CD4-positive, alpha-beta T cell (primary cell): ENCODE measurements at regions of chr18 and their contacts with region 1.

Region 1: GRCh38 chr18:56748698-56749268 is 97.6 kb downstream of the WDR7 start:
- DNase-seq: peak in 3 of 14 experiments; percentile 21 to 51 (median 45)
- ATAC-seq: no peak
- H3K4me3 ChIP-seq: no peak overlapping the region
- H3K4me3 Mint-ChIP-seq: no peak overlapping the region
- H3K27ac ChIP-seq: no peak overlapping the region
- H3K27ac Mint-ChIP-seq: no peak overlapping the region
- H3K4me1 ChIP-seq: no peaks in the 10 kb centered on the region
- H3K4me1 Mint-ChIP-seq: peaks cover 25% of the 10 kb centered on the region
- H3K27me3 ChIP-seq: no peaks in the 10 kb centered on the region
- H3K27me3 Mint-ChIP-seq: no peaks in the 10 kb centered on the region
- CTCF ChIP-seq: peak; percentile 72

Region 2: DNA sequence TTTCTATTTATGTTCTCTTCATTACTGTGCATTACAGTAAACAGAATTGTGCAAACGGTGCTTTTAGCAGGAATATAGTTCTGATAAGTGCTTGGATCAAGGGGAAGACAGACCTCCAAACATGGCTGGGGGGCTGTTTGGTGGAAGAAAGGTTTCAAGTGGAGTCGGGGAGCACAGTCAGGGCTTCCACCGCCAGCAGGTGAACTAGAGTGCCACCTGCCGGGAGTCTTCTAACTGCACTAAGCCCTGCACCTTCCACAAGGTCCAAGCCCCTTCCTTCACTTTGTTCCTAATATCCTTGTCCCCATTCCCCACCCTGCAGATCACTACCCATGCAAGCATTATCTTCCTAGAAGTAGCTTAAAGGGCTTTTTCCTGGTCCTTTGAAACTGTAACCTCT is 697.5 kb after region 1 on chr18:
- CTCF ChIA-PET with region 1: no interaction called
- POLR2A ChIA-PET with region 1: no interaction called
- intact Hi-C with region 1: loop called in 1 of 2 experiments (anchors 5 kb)
- DNase-seq: no peak
- ATAC-seq: no peak
- H3K4me3 ChIP-seq: no peak overlapping the region
- H3K4me3 Mint-ChIP-seq: no peak overlapping the region
- H3K27ac ChIP-seq: no peak overlapping the region
- H3K27ac Mint-ChIP-seq: no peak overlapping the region
- H3K4me1 ChIP-seq: no peaks in the 10 kb centered on the region
- H3K4me1 Mint-ChIP-seq: no peaks in the 10 kb centered on the region
- H3K27me3 ChIP-seq: peaks cover 31 to 52% of the 10 kb centered on the region in 2 experiments
- H3K27me3 Mint-ChIP-seq: peaks cover 92% of the 10 kb centered on the region
- CTCF ChIP-seq: no peak

Region 3: DNA sequence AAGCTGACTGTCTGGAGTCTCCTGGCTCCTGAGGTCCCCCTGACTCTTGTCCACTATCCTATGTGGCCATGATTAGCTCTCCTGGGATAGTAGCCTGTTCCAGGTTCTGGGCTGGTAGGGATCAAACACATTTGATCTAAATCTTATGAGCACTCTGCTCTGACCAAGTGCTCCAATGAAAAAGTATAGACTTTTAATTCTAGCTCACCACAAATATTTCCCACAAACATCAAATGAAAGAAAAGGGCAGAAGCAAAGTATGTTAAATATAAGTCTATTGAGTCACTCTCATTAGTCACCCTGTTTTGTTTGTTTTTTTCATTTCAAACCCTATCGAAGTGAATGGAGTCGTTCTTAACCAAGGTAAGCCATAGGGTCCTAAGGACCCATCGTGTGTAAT is 1255.5 kb after region 1 on chr18:
- CTCF ChIA-PET with region 1: no interaction called
- POLR2A ChIA-PET with region 1: no interaction called
- intact Hi-C with region 1: no loop called
- DNase-seq: no peak
- ATAC-seq: no peak
- H3K4me3 ChIP-seq: no peak overlapping the region
- H3K4me3 Mint-ChIP-seq: no peak overlapping the region
- H3K27ac ChIP-seq: no peak overlapping the region
- H3K27ac Mint-ChIP-seq: no peak overlapping the region
- H3K4me1 ChIP-seq: no peaks in the 10 kb centered on the region
- H3K4me1 Mint-ChIP-seq: no peaks in the 10 kb centered on the region
- H3K27me3 ChIP-seq: peaks cover 2 to 4% of the 10 kb centered on the region in 2 experiments
- H3K27me3 Mint-ChIP-seq: peaks cover 28% of the 10 kb centered on the region
- CTCF ChIP-seq: no peak

Region 4: GRCh38 chr18:58128381-58129374 is 1379.9 kb after region 1 on chr18:
- CTCF ChIA-PET with region 1: no interaction called
- POLR2A ChIA-PET with region 1: no interaction called
- intact Hi-C with region 1: loop called in 1 of 2 experiments (anchors 5 kb)
- DNase-seq: no peak
- ATAC-seq: no peak
- H3K4me3 ChIP-seq: no peak overlapping the region
- H3K4me3 Mint-ChIP-seq: no peak overlapping the region
- H3K27ac ChIP-seq: no peak overlapping the region
- H3K27ac Mint-ChIP-seq: no peak overlapping the region
- H3K4me1 ChIP-seq: peaks cover 2% of the 10 kb centered on the region
- H3K4me1 Mint-ChIP-seq: no peaks in the 10 kb centered on the region
- H3K27me3 ChIP-seq: no peaks in the 10 kb centered on the region
- H3K27me3 Mint-ChIP-seq: peaks cover 17% of the 10 kb centered on the region
- CTCF ChIP-seq: no peak